Mammary epithelial cell (primary cell): ENCODE measurements at regions of chr7 and their contacts with region 1.

Region 1: DNA sequence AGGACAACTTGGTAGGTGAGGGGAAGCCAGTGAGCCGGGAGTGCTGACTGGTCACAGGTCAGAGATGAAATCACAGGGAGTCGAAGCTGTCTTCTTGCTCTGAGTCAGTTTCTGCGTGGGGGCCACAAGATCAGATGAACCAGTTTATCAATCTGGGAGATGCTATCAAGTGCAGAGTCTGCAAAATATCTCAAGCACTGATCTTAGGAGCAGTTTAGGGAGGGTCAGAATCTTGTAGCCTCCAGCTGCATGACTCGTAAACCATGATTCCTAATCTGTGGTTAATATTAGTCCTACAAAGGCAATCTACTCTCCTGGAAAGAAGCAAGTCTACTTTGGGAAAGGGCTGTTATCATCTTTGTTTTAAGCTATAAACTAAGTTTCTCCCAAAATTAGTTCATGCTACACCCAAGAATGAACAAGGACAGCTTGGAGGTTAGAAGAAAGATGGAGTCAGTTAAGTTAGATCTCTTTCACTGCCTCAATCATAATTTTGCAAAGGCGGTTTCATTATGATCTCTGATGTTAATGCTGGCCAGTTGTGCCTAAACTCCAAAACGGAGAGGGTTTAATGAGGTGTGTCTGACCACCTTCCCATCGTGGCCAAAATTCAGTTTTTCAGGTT is 8.4 kb upstream of the LMOD2 start:
- DNase-seq: peak; percentile 58
- H3K4me3 ChIP-seq: no peak overlapping the region
- H3K27ac ChIP-seq: no peak overlapping the region
- H3K4me1 ChIP-seq: peaks cover 28% of the 10 kb centered on the region
- H3K27me3 ChIP-seq: no peaks in the 10 kb centered on the region
- CTCF ChIP-seq: no peak

Region 2: DNA sequence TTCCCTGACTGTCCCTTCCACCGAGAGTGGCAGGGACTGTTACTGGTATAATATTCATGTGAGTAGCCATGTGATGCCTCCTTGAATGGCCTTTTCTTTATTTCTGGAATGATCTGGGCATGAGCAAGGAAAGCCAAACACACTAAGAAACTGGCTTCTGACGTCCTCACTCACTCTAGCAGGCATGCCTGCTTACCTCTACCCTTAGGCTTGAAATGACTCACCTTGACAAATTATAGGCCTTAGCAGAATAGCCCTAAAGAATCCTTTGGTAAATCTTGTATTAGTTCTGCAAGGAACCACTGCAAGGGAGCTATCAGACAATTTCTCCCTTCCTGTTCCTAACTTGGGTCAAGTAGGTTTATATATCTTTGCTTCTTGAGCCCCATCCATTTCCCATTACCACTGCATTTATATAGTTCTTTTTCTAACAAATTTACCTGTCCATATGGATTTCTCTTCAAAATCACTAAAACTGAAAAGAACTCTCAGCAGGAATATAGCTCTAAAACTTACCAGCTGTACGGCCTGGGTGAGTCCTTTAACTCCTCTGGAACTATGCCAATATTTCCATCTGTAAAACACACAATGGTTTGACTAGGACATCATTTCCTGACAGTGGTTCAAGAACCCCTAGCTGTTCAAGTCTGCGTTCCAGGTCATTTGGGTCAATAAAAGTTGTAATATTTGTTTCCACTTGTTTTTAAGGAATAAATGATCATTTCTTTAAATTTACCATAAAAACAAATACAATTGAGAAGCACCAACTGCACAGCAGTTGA is 76.6 kb before region 1 on chr7:
- CTCF ChIA-PET with region 1: no interaction called
- dilution Hi-C with region 1: no loop called
- in situ Hi-C with region 1: no loop called
- intact Hi-C with region 1: no loop called
- DNase-seq: peak; percentile 90
- H3K4me3 ChIP-seq: no peak overlapping the region
- H3K27ac ChIP-seq: no peak overlapping the region
- H3K4me1 ChIP-seq: peaks cover 17% of the 10 kb centered on the region
- H3K27me3 ChIP-seq: no peaks in the 10 kb centered on the region
- CTCF ChIP-seq: no peak

Region 3: GRCh38 chr7:123674399-123675180 is 27.4 kb after region 1 on chr7:
- CTCF ChIA-PET with region 1: no interaction called
- dilution Hi-C with region 1: no loop called
- in situ Hi-C with region 1: no loop called
- intact Hi-C with region 1: loop called (anchors 2 kb)
- DNase-seq: peak; percentile 82
- H3K4me3 ChIP-seq: peak overlapping the region in 1 of 3 experiments; percentile 22
- H3K27ac ChIP-seq: peak overlapping the region; percentile 84
- H3K4me1 ChIP-seq: peaks cover 27% of the 10 kb centered on the region
- H3K27me3 ChIP-seq: no peaks in the 10 kb centered on the region
- CTCF ChIP-seq: no peak